OCI-LY7 (cell line): ENCODE measurements at regions of chr20 and their contacts with region 1.

Region 1: DNA sequence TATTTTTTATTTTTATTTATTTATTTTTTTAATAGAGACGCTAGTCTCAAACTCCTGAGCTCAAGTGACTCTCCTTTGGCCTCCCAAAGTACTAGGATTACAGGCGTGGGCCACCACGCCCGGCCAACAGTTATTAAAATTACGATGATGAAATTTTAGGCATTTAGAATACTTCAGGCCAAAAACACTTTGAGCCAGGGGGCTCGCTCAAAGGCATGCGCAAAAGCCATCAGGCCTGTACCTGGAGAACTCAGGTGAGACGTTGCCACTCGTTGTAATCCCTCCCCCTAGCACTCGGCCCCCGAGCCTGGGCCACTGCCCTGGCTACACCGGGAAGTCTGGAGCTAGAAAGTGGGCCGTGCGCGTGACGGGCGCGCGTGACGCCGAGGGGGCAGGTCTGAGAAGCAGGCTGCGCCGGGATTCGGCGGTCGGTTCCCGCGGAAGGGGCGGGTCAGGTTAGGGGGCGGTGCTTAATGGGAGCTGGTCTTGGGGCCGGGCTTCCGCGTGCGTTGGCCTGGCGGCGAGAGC is 337 bp upstream of the CBFA2T2 start:
- DNase-seq: peak; percentile 98
- H3K4me3 ChIP-seq: peak overlapping the region; percentile 67
- H3K27ac ChIP-seq: peak overlapping the region; percentile 41
- H3K4me1 ChIP-seq: peaks cover 34% of the 10 kb centered on the region
- CTCF ChIP-seq: no peak

Region 2: DNA sequence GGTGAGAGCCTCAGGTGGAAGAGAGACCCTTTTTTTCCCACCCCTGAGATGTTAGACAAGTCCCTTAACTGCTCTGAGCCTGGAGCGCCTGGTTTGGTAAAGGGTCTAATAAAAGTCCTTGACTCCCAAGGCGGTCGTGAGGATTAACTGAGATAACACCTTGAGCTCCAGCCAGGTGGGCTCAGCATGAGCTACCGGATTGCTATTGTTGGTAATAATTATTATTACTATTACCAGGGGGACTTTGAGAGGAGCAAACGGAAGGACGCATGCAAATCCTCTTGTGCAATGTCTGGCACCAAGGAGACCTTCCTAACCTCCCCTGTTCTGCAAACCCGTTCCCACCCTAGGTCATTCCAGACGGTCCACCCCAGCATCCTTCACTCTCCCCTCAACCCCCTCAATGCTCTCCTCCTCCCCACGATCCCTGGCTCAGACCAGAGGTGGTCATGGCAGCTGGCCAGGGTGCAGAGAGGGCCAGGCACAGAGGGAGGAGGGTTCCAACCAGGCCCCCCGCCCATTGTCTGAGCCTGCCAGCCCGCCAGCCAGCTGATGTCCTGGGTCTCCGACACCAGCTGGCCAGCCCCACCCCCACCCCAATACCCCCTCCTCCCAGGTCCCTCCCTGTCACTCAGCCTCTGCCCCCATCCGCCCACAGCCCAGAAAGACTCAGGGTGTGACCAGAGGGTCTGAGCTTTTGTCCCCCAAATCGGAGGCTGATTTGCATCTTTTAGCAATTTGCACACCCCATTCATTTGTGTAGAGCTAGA is 14.0 kb before region 1 on chr20:
- CTCF ChIA-PET with region 1: interaction called, 8 read pairs
- POLR2A ChIA-PET with region 1: interaction called, 12 read pairs
- intact Hi-C with region 1: no loop called
- DNase-seq: no peak
- H3K4me3 ChIP-seq: peak overlapping the region; percentile 49
- H3K27ac ChIP-seq: peak overlapping the region; percentile 38
- H3K4me1 ChIP-seq: peaks cover 62% of the 10 kb centered on the region
- CTCF ChIP-seq: no peak

Region 3: GRCh38 chr20:33501000-33501399 is 11.4 kb after region 1 on chr20:
- CTCF ChIA-PET with region 1: no interaction called
- POLR2A ChIA-PET with region 1: interaction called, 10 read pairs
- intact Hi-C with region 1: no loop called
- DNase-seq: no peak
- H3K4me3 ChIP-seq: no peak overlapping the region
- H3K27ac ChIP-seq: peak overlapping the region; percentile 0
- H3K4me1 ChIP-seq: peaks cover 41% of the 10 kb centered on the region
- CTCF ChIP-seq: no peak